MCF 10A (cell line): ENCODE measurements at regions of chr5 and their contacts with region 1.

Region 1: GRCh38 chr5:127746756-127747155 is 43.6 kb downstream of the CCDC192 start:
- DNase-seq: peak; percentile 43
- H3K4me3 Mint-ChIP-seq: no peak overlapping the region
- H3K27ac Mint-ChIP-seq: no peak overlapping the region
- H3K4me1 Mint-ChIP-seq: no peaks in the 10 kb centered on the region
- H3K27me3 Mint-ChIP-seq: peaks cover 25% of the 10 kb centered on the region
- CTCF ChIP-seq: peak; percentile 57

Region 2: GRCh38 chr5:128201065-128201926 is 454.5 kb after region 1 on chr5:
- CTCF ChIA-PET with region 1: interaction called, 7 read pairs
- POLR2A ChIA-PET with region 1: no interaction called
- intact Hi-C with region 1: loop called (anchors 1 kb)
- DNase-seq: peak; percentile 81
- H3K4me3 Mint-ChIP-seq: peak overlapping the region; percentile 42
- H3K27ac Mint-ChIP-seq: no peak overlapping the region
- H3K4me1 Mint-ChIP-seq: peaks cover 21% of the 10 kb centered on the region
- H3K27me3 Mint-ChIP-seq: no peaks in the 10 kb centered on the region
- CTCF ChIP-seq: peak; percentile 95